Activated T-helper 2 cell treated with anti-CD3 and anti-CD28 coated beads, Interferon-gamma antibody, Interleukin-2, Interleukin-4, amounts not matched to agents 10 μg/mL and 5 μg/mL and 100 μg/mL, durations not matched to agents 14 hours and 24 hours and 36 hours (primary cell): ENCODE measurements at regions of chr21 and their contacts with region 1.

Region 1: GRCh38 chr21:40143822-40144525 is 276.7 kb downstream of the PCP4 start:
- DNase-seq: peak; percentile 10
- H3K4me3 Mint-ChIP-seq: no peak overlapping the region
- H3K27ac Mint-ChIP-seq: no peak overlapping the region
- H3K4me1 Mint-ChIP-seq: no peaks in the 10 kb centered on the region
- H3K27me3 Mint-ChIP-seq: no peaks in the 10 kb centered on the region

Region 2: DNA sequence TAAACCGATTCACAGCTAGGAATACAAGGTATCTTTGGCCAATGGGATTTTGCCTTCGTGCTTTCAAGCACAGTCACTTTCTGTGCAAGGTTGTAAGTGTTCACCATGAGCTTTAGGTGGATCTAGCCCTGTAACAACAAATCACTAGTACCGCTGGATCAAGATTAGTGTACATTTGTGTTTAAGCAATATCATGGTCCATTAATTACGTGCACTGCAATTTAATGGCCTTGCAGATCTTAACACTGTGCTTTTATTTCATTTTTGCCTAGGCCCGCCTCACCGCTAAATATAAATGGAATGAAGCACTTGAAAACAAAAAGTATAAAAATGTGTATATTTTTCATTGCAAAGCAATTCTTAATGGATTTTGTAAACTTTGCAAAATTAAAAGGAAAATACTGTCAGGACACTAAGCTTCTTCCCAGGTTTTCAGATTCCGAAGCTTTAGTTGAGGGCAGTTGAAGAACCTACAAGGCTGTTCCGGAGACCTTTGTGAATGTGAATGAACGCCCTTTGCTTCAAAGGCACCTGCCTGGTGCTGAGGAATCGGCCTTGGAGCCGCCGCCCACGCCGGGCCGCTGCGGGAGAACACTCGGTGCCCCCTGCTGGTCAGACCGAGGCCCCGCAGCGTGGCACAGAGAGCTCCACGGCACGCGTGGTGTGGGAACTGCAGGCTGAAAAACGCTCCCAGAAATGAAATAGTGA is 242.1 kb after region 1 on chr21:
- intact Hi-C with region 1: loop called (anchors 5 kb)
- DNase-seq: peak; percentile 9
- H3K4me3 Mint-ChIP-seq: no peak overlapping the region
- H3K27ac Mint-ChIP-seq: no peak overlapping the region
- H3K4me1 Mint-ChIP-seq: no peaks in the 10 kb centered on the region
- H3K27me3 Mint-ChIP-seq: no peaks in the 10 kb centered on the region

Region 3: DNA sequence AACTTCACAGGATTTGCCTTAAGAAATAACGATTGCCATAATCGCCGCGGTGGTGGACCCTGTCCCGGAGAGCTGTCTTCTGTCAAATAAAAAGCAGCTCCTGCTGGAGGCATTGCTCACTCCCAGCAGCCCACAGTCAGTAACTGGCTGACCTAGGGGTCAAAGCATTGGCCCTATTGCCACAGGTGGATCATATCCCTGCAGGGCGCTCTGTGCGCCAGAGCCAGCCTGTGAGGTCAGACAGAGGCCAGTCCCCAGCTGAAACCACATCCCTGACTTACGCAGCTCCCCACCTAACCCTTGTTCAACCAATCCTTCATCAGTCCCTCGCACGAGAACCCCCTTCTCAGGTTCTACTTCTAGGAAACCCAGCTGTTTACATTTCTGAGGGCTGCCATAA is 628.9 kb after region 1 on chr21:
- intact Hi-C with region 1: no loop called
- DNase-seq: no peak
- H3K4me3 Mint-ChIP-seq: no peak overlapping the region
- H3K27ac Mint-ChIP-seq: no peak overlapping the region
- H3K4me1 Mint-ChIP-seq: no peaks in the 10 kb centered on the region
- H3K27me3 Mint-ChIP-seq: no peaks in the 10 kb centered on the region

Region 4: GRCh38 chr21:41068967-41069642 is 925.1 kb after region 1 on chr21:
- intact Hi-C with region 1: loop called (anchors 10 kb)
- DNase-seq: peak; percentile 36
- H3K4me3 Mint-ChIP-seq: no peak overlapping the region
- H3K27ac Mint-ChIP-seq: no peak overlapping the region
- H3K4me1 Mint-ChIP-seq: peaks cover 3% of the 10 kb centered on the region
- H3K27me3 Mint-ChIP-seq: peaks cover 16% of the 10 kb centered on the region